ENCODE measurements at regions of chr1 and their contacts with region 1.

Region 1: GRCh38 chr1:93179886-93180722 is at the start of gene TMED5:
- DNase-seq: peak; percentile 97 to 99
- H3K4me3 ChIP-seq: peak within 1 kb of the TSS; percentile 96
- H3K27ac ChIP-seq: peak within 1 kb of the TSS; percentile 100
- H3K4me1 ChIP-seq: peaks cover 0 to 16% of the 10 kb centered on the region in 2 donors
- H3K27me3 ChIP-seq: no peaks in the 10 kb centered on the region
- CTCF ChIP-seq: peak; percentile 2 to 22 (median 12)
- total RNA-seq, gene TMED5: 39.1 TPM

Region 2: DNA sequence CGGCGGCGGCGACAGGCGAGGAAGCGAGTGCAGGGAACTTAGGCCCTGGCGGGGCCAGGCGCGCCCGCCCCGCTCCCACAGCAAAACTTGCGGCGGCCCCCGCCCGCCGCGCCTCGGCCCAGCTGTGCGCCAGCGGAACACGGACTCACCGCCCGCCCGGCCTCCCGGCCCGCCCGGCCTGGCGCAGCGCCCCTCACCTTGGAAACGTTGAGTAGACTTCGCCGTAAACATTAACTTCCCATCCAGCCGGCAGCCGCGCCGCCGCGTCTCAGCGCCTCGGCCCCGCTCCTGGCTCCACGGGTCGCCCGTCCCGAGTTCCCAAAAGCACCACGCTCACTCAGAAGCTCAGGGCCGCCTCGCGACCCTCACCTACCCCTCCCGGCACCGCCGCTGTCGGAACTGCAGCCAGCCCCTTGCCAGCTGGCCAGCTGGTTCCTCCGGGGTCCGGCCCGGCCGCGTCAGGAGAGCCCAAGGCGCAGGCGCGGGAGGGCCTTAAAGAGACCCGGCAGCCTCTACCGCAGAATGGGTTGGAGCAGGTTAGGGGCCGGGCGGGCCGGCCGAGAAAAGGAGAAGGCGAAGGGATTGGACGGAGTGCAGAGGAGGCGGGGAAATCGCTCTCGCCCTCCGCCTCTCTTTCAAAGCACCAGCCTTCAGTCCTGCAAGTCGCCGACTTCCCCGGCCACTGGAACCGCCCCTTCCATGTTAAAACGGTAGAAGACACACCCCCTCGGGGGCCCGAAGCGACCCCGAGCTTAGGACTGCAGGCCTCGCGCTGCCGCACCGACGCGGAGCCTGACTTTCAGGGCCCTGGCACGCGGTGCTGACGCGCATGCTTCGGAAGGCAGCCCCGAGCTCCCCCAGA is 395.2 kb before region 1 on chr1 and contains the start of gene EVI5:
- intact Hi-C with region 1: loop called (anchors 1 kb)
- DNase-seq: peak; percentile 82 to 96
- H3K4me3 ChIP-seq: peak within 1 kb of the TSS; percentile 74 to 100
- H3K27ac ChIP-seq: peak within 1 kb of the TSS; percentile 90 to 100
- H3K4me1 ChIP-seq: peaks cover 0 to 13% of the 10 kb centered on the region in 2 donors
- H3K27me3 ChIP-seq: no peaks in the 10 kb centered on the region
- CTCF ChIP-seq: no peak
- total RNA-seq, gene EVI5: 19.8 TPM

Region 3: GRCh38 chr1:92960395-92961130 is 219.5 kb before region 1 on chr1:
- intact Hi-C with region 1: loop called (anchors 1 kb)
- DNase-seq: peak; percentile 33 to 83
- H3K4me3 ChIP-seq: peak overlapping the region; percentile 67 to 92
- H3K27ac ChIP-seq: peak overlapping the region; percentile 92 to 98
- H3K4me1 ChIP-seq: peaks cover 0 to 16% of the 10 kb centered on the region in 2 donors
- H3K27me3 ChIP-seq: no peaks in the 10 kb centered on the region
- CTCF ChIP-seq: peak; percentile 64 to 75 (median 71)

Region 4: GRCh38 chr1:93078986-93079654 is 101.0 kb before region 1 on chr1 and contains the start of gene MTF2:
- intact Hi-C with region 1: loop called (anchors 1 kb)
- DNase-seq: peak; percentile 53 to 94
- H3K4me3 ChIP-seq: peak within 1 kb of the TSS; percentile 78 to 89
- H3K27ac ChIP-seq: peak within 1 kb of the TSS; percentile 23 to 56
- H3K4me1 ChIP-seq: peaks cover 0 to 16% of the 10 kb centered on the region in 2 donors
- H3K27me3 ChIP-seq: no peaks in the 10 kb centered on the region
- CTCF ChIP-seq: no peak
- total RNA-seq, gene MTF2: 2.3 TPM

Region 5: GRCh38 chr1:93692983-93693591 is 513.0 kb after region 1 on chr1:
- intact Hi-C with region 1: loop called (anchors 10 kb)
- DNase-seq: peak in 1 of 2 donors; percentile 80
- H3K4me3 ChIP-seq: peak overlapping the region in 1 of 2 donors; percentile 27
- H3K27ac ChIP-seq: peak overlapping the region; percentile 74 to 89
- H3K4me1 ChIP-seq: peaks cover 5 to 29% of the 10 kb centered on the region in 2 donors
- H3K27me3 ChIP-seq: no peaks in the 10 kb centered on the region
- CTCF ChIP-seq: no peak